Activated CD4-positive, alpha-beta memory T cell treated with anti-CD3 and anti-CD28 coated beads for 36 hours (primary cell): ENCODE measurements at regions of chr11 and their contacts with region 1.

Region 1: GRCh38 chr11:45102810-45103621 is 43.4 kb upstream of the PRDM11 start:
- DNase-seq: peak; percentile 86
- H3K4me3 Mint-ChIP-seq: peak overlapping the region; percentile 66
- H3K27ac Mint-ChIP-seq: peak overlapping the region; percentile 68
- H3K4me1 Mint-ChIP-seq: peaks cover 12% of the 10 kb centered on the region
- H3K27me3 Mint-ChIP-seq: peaks cover 12% of the 10 kb centered on the region

Region 2: DNA sequence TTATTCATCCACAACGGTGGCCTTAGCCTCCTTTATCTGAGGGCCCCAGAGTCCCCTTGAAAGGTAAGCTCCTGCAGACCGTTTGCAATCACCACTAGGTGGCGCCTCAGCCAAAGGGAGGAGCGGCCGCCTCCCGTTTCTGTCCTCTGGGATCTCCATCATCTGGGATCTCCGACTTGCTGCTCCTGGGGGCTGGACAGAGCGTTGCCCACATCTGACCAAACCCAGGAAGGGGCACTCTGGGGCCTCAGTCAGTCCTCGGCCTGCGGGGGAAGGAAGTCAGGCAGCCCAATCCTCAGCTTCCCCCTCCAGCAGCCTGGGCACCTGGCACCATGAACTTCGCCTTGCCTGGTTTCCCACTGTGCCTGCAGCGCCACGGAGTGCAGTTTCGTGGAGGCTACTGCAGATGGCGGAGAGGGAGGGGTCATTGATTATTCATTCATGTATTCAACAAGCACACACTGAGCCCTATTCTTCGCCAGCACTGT is 175.8 kb before region 1 on chr11:
- CTCF ChIA-PET with region 1: interaction called, 1,143 read pairs
- POLR2A ChIA-PET with region 1: no interaction called
- intact Hi-C with region 1: loop called (anchors 1 kb)
- DNase-seq: peak; percentile 67
- H3K4me3 Mint-ChIP-seq: no peak overlapping the region
- H3K27ac Mint-ChIP-seq: no peak overlapping the region
- H3K4me1 Mint-ChIP-seq: no peaks in the 10 kb centered on the region
- H3K27me3 Mint-ChIP-seq: no peaks in the 10 kb centered on the region

Region 3: DNA sequence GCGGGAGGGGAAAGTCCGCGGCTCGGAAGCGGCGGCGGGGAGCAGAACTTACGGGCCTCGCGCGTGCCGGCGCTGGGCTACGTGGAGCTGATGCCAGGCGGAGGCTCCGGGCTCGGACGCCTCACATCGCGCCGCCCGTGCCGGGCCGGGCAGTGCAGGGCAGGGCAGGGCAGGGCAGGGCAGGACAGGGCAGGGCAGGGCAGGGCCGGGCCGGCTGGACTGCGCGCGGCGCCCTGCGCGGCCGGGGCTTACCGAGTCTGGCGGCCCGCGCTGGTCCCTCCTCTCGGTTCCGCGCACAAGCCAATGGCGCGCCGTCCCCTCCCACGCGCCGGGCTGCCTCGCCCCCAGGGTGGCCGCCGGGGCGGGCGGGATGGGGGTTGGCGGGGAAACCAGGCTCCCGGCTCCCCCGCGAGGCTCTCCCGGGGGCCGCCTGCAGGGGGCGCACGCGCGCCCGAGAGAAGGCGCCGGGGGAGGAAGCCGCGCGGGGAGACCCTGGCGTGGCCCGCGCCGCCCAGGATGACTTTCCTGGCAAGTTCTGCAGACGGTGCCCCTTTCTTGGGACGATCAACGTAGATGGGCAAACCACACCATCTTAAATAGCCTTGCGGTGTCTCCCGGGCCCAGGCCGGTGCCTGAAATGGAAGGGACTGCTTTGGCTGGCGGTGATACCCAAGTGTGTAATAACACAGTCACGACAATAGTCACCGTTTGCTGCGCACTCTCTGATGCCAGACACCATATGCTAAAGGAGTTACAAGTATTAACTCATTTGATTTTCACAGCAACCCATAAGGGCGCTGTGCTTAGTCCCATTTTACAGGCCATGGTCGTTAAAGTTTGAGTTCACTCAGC is 152.2 kb before region 1 on chr11 and contains the start of gene TP53I11:
- CTCF ChIA-PET with region 1: interaction called, 1,143 read pairs
- POLR2A ChIA-PET with region 1: no interaction called
- intact Hi-C with region 1: loop called (anchors 5 kb)
- DNase-seq: peak; percentile 82
- H3K4me3 Mint-ChIP-seq: peak within 1 kb of the TSS; percentile 76
- H3K27ac Mint-ChIP-seq: no peak within 1 kb of the TSS
- H3K4me1 Mint-ChIP-seq: peaks cover 6% of the 10 kb centered on the region
- H3K27me3 Mint-ChIP-seq: no peaks in the 10 kb centered on the region
- total RNA-seq, gene TP53I11: 15.7 to 17.6 TPM

Region 4: GRCh38 chr11:45285930-45286632 is 183.1 kb after region 1 on chr11 and contains the start of gene SYT13:
- CTCF ChIA-PET with region 1: interaction called, 11 read pairs
- POLR2A ChIA-PET with region 1: no interaction called
- intact Hi-C with region 1: no loop called
- DNase-seq: no peak
- H3K4me3 Mint-ChIP-seq: no peak within 1 kb of the TSS
- H3K27ac Mint-ChIP-seq: no peak within 1 kb of the TSS
- H3K4me1 Mint-ChIP-seq: no peaks in the 10 kb centered on the region
- H3K27me3 Mint-ChIP-seq: peaks cover 58% of the 10 kb centered on the region
- total RNA-seq, gene SYT13: not detected